GM18951 (cell line): ENCODE measurements at regions of chr1 and their contacts with region 1.

Region 1: DNA sequence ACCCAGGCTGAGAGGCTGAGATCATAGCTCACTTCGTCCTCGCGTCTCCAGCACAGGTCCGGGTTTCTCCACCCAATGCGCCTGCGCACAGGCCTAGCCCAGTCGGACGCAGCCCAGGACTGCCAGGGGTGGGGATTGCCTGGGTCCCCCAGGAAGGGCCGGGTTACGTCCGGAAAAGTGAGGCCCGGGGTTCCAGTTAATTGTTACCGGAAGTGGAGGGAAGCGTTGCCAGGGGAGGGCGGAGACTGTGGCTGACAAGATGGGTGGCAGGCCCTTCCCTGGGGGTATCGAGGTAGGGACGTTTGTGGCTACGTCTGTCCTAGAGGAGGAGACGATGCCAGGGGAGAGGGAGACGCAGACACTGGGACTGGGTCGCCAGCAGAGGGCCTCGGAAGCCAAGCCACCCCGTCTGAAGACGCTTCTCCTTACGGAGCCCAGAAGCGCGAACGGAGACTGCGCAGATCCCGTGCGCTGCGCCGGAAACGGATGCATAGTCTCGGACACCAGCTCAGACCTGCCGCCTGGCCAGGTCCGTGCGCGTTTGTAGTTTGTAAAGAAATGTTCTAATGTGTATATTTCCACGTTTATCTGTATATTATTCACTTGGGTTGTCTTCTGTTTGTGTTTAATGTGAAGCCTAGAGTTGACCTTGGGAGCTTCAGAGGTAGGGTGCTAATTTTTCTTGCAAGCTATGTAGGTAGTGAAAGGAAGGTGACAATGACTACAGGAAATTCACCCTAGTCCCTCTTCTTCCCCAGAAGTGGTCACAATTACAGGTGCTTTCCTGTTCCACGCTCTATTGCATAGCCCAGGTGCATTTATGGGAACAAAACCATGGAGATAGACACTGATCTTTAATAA is 7.3 kb downstream of the RSRP1 start:
- POLR2A ChIP-seq: no peak

Region 2: DNA sequence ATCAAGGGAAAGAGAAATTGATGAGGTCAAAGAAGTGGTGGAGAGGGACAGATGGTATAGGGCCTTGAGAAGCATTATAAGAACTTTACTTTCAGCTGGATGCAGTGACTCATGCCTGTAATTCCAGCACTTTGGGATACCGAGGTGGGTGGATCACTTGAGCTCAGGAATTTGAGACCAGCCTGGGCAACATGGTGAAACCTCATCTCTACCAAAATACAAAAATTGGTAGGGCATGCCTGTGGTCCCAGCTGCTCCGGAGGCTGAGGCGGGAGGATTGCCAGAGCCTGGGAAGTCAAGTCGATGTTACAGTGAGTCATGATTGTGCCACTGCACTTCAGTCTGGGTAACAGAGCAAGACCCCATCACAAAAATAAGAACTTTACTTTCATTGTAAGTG is 104.0 kb after region 1 on chr1:
- in situ Hi-C with region 1: loop called (anchors 10 kb)
- POLR2A ChIP-seq: no peak